Mammary epithelial cell (primary cell): ENCODE measurements at regions of chr7 and their contacts with region 1.

Region 1: DNA sequence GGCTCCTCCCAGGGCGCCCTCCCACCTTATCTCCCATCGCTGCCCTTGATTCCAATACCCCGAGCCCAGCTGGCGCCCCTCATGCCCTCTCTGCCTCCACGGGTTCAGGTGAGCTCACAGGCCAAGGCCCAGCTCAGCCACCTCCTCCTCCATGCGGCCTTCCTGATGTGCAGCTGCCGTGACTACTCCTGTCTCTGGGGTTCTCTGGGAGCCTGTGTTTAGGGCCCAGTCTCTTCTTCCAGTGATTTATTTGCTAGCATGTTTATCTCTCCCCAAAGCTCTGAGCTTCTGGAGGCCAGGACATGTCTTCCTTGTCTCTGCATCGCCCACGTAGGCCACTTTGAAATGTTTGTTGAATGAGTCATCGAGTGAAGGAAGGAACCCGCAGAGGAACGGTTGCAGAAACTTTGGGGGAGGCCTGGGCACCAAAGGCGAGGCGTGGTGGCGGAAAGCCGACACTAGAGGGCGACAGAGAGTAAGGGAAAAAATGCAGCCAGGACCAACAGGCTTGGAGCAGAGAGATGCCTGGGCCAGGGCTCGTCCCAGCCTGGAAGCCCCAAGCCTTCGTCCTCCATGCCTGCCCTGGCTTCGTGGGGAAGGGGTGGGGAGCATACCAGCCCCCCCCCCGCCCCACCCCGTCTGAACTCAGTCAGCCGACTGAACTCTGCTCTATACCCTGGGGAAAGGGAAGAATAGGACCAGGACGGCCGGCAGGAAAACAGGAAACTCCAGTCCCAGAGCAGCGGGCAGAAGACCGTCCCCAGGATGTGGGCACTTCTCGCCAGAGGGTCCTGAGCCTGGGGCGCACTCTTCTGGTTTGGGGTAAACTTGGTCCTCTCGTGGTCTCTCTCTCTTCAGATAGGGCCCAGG is 10.9 kb upstream of the HSPB1 start:
- DNase-seq: peak; percentile 99
- H3K4me3 ChIP-seq: peak overlapping the region in 2 of 3 experiments; percentile 23 to 32
- H3K27ac ChIP-seq: peak overlapping the region; percentile 91
- H3K4me1 ChIP-seq: peaks cover 48% of the 10 kb centered on the region
- H3K27me3 ChIP-seq: no peaks in the 10 kb centered on the region
- CTCF ChIP-seq: peak; percentile 94 to 98

Region 2: GRCh38 chr7:76149847-76150691 is 141.5 kb before region 1 on chr7:
- CTCF ChIA-PET with region 1: no interaction called
- dilution Hi-C with region 1: no loop called
- in situ Hi-C with region 1: no loop called
- intact Hi-C with region 1: no loop called
- DNase-seq: no peak
- H3K4me3 ChIP-seq: no peak overlapping the region
- H3K27ac ChIP-seq: no peak overlapping the region
- H3K4me1 ChIP-seq: peaks cover 13% of the 10 kb centered on the region
- H3K27me3 ChIP-seq: no peaks in the 10 kb centered on the region
- CTCF ChIP-seq: no peak

Region 3: GRCh38 chr7:76179686-76180085 is 111.9 kb before region 1 on chr7:
- CTCF ChIA-PET with region 1: no interaction called
- dilution Hi-C with region 1: no loop called
- in situ Hi-C with region 1: no loop called
- intact Hi-C with region 1: loop called (anchors 1 kb)
- DNase-seq: no peak
- H3K4me3 ChIP-seq: no peak overlapping the region
- H3K27ac ChIP-seq: no peak overlapping the region
- H3K4me1 ChIP-seq: peaks cover 3% of the 10 kb centered on the region
- H3K27me3 ChIP-seq: no peaks in the 10 kb centered on the region
- CTCF ChIP-seq: no peak

Region 4: DNA sequence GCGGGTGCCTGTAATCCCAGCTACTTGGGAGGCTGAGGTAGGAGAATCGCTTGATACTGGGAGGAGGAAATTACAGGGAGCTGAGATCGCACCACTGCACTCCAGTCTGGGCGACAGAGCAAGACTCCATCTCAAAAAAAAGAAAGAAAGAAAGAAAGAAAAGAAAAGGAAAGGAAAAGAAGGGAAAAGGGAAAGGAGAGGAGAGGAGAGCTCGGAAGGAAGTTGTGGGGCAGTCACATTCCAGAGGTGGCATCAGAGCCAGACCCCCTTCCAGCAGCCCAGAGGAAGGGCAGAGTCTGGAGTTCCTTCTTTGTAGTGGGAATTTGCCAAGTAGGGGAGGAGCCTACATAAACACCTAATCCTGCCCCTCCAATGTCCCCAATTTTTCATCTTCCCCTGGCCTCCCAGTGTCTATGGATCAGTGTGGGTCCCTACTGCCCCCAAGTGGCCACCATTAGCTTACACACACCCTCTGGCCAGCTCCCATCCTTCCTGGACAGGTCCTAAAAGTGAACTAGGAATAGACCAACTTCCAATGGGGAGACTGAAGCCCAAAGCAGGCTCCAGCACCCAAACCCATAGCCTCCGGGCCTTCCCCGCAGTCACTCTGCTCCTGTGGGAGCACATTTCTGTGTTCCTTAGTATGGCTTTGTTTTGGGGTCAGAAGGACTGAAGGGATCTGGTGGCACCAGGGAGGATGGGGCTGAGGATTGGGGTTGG is 28.7 kb before region 1 on chr7:
- CTCF ChIA-PET with region 1: no interaction called
- dilution Hi-C with region 1: no loop called
- in situ Hi-C with region 1: no loop called
- intact Hi-C with region 1: loop called (anchors 1 kb)
- DNase-seq: peak; percentile 48
- H3K4me3 ChIP-seq: no peak overlapping the region
- H3K27ac ChIP-seq: no peak overlapping the region
- H3K4me1 ChIP-seq: peaks cover 5% of the 10 kb centered on the region
- H3K27me3 ChIP-seq: peaks cover 5% of the 10 kb centered on the region
- CTCF ChIP-seq: peak; percentile 79 to 90

Region 5: DNA sequence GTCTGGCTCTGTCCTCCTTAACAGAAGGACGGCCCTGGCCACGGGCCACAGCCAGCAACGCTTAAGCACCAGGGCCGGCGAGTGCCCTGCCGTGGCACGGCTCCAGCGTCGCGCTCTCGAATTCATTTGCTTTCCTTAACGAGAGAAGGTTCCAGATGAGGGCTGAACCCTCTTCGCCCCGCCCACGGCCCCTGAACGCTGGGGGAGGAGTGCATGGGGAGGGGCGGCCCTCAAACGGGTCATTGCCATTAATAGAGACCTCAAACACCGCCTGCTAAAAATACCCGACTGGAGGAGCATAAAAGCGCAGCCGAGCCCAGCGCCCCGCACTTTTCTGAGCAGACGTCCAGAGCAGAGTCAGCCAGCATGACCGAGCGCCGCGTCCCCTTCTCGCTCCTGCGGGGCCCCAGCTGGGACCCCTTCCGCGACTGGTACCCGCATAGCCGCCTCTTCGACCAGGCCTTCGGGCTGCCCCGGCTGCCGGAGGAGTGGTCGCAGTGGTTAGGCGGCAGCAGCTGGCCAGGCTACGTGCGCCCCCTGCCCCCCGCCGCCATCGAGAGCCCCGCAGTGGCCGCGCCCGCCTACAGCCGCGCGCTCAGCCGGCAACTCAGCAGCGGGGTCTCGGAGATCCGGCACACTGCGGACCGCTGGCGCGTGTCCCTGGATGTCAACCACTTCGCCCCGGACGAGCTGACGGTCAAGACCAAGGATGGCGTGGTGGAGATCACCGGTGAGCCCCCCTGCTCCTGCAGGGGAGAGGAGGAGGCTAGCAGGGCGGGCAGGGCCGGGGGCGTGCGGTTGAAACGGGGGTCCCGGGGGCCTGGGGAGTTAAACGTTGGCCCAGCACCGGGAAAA is 11.0 kb after region 1 on chr7 and contains the start of gene HSPB1:
- CTCF ChIA-PET with region 1: interaction called, 8 read pairs
- dilution Hi-C with region 1: no loop called
- in situ Hi-C with region 1: no loop called
- intact Hi-C with region 1: loop called (anchors 1 kb)
- DNase-seq: peak; percentile 95
- H3K4me3 ChIP-seq: peak within 1 kb of the TSS; percentile 65 to 91 (median 78)
- H3K27ac ChIP-seq: peak within 1 kb of the TSS; percentile 66
- H3K4me1 ChIP-seq: peaks cover 57% of the 10 kb centered on the region
- H3K27me3 ChIP-seq: no peaks in the 10 kb centered on the region
- CTCF ChIP-seq: no peak
- total RNA-seq, gene HSPB1: 523 to 862 TPM

Region 6: DNA sequence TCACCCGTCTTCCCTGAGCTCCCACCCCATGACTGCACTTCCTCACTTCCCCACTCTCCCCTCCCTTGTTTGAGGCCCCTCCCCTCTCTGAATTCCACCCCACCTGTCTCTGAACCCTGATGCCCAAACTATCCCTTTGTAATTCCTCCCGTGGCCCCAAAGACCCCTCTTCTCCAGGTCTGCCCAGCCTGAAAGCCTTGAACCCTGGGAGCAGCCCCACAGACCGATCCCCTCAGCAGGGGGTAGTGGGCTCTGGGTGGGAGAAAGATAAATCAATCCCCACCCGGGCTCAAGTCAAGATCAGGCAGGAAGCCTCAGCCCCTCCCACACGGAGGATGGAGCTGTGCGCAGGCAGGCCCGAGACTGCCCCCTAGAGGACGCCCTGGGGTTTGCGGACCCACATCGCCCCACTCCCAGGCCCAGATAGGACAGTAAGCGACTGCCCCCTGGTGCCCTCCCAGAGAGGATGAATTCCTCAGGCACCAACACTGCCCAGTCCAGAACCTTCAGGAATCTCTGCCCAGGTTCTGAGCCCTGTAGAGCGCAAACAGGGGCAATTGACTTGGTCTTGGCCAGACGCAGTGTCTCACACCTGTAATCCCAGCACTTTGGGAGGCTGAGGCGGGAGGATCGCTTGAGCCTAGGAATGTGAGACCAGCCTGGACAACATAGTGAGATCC is 22.6 kb after region 1 on chr7:
- CTCF ChIA-PET with region 1: interaction called, 5 read pairs
- dilution Hi-C with region 1: no loop called
- in situ Hi-C with region 1: no loop called
- intact Hi-C with region 1: loop called (anchors 1 kb)
- DNase-seq: peak; percentile 79
- H3K4me3 ChIP-seq: no peak overlapping the region
- H3K27ac ChIP-seq: no peak overlapping the region
- H3K4me1 ChIP-seq: peaks cover 24% of the 10 kb centered on the region
- H3K27me3 ChIP-seq: no peaks in the 10 kb centered on the region
- CTCF ChIP-seq: peak; percentile 96 to 100

Region 7: DNA sequence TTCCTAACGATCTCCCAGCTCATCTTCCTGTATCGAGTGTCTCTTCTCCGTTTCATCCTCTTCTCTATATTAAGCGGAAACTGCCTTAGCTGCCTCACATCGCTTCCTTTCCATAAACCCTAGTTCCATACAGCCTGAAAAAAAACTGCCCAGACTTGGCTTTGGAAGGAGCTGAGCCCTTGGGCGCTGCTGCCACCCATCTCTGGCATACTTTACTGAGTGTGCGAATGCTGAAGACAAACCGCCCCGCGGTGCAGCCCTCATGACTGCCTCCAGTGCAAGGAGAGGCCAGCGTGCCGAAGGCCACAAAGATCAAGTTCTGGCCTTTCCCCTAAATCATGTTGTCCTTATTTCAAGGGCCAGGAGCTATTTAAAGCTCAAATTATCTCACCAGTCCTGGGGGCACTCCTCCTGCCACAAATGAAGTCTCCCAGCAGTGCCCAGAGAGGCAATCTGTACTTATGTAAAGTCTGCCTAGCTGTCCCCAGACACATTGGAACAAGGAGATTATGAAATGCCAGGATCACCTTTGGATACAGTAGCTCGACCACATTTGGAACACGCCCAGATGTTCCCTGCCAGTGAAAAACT is 42.0 kb after region 1 on chr7:
- CTCF ChIA-PET with region 1: no interaction called
- dilution Hi-C with region 1: no loop called
- in situ Hi-C with region 1: no loop called
- intact Hi-C with region 1: no loop called
- DNase-seq: no peak
- H3K4me3 ChIP-seq: no peak overlapping the region
- H3K27ac ChIP-seq: no peak overlapping the region
- H3K4me1 ChIP-seq: peaks cover 10% of the 10 kb centered on the region
- H3K27me3 ChIP-seq: no peaks in the 10 kb centered on the region
- CTCF ChIP-seq: no peak

Region 8: GRCh38 chr7:76346778-76347177 is 55.2 kb after region 1 on chr7:
- CTCF ChIA-PET with region 1: no interaction called
- dilution Hi-C with region 1: no loop called
- in situ Hi-C with region 1: no loop called
- intact Hi-C with region 1: no loop called
- DNase-seq: no peak
- H3K4me3 ChIP-seq: no peak overlapping the region
- H3K27ac ChIP-seq: no peak overlapping the region
- H3K4me1 ChIP-seq: peaks cover 5% of the 10 kb centered on the region
- H3K27me3 ChIP-seq: no peaks in the 10 kb centered on the region
- CTCF ChIP-seq: no peak

Region 9: GRCh38 chr7:76428868-76429760 is 137.5 kb after region 1 on chr7:
- CTCF ChIA-PET with region 1: no interaction called
- dilution Hi-C with region 1: loop called (anchors 10 kb)
- in situ Hi-C with region 1: no loop called
- intact Hi-C with region 1: no loop called
- DNase-seq: no peak
- H3K4me3 ChIP-seq: no peak overlapping the region
- H3K27ac ChIP-seq: no peak overlapping the region
- H3K4me1 ChIP-seq: peaks cover 14% of the 10 kb centered on the region
- H3K27me3 ChIP-seq: no peaks in the 10 kb centered on the region
- CTCF ChIP-seq: no peak